ENCODE measurements at regions of chr19 and their contacts with region 1.

Region 1: GRCh38 chr19:13262450-13262849 is 112.2 kb downstream of the IER2 start:
- DNase-seq: no peak
- ATAC-seq: no peak

Region 2: GRCh38 chr19:13195678-13196077 is 66.8 kb before region 1 on chr19:
- intact Hi-C with region 1: loop called (anchors 2 kb)
- DNase-seq: no peak
- ATAC-seq: no peak

Measured in Right ventricle myocardium inferior (tissue), 1 donor.